Endothelial cell of umbilical vein (primary cell): ENCODE measurements at regions of chr5 and their contacts with region 1.

Region 1: GRCh38 chr5:127206320-127207113 is 84.1 kb upstream of the MEGF10 start:
- DNase-seq: peak; percentile 95
- H3K4me3 ChIP-seq: no peak overlapping the region
- H3K27ac ChIP-seq: peak overlapping the region; percentile 58
- H3K4me1 ChIP-seq: peaks cover 18% of the 10 kb centered on the region
- H3K27me3 ChIP-seq: peaks cover 0 to 2% of the 10 kb centered on the region in 2 experiments
- CTCF ChIP-seq: no peak
- POLR2A ChIP-seq: no peak

Region 2: GRCh38 chr5:126912616-126913200 is 293.8 kb before region 1 on chr5:
- CTCF ChIA-PET with region 1: no interaction called
- POLR2A ChIA-PET with region 1: no interaction called
- dilution Hi-C with region 1: no loop called
- intact Hi-C with region 1: no loop called
- DNase-seq: no peak
- H3K4me3 ChIP-seq: no peak overlapping the region
- H3K27ac ChIP-seq: no peak overlapping the region
- H3K4me1 ChIP-seq: peaks cover 7% of the 10 kb centered on the region
- H3K27me3 ChIP-seq: no peaks in the 10 kb centered on the region
- CTCF ChIP-seq: no peak
- POLR2A ChIP-seq: no peak

Region 3: DNA sequence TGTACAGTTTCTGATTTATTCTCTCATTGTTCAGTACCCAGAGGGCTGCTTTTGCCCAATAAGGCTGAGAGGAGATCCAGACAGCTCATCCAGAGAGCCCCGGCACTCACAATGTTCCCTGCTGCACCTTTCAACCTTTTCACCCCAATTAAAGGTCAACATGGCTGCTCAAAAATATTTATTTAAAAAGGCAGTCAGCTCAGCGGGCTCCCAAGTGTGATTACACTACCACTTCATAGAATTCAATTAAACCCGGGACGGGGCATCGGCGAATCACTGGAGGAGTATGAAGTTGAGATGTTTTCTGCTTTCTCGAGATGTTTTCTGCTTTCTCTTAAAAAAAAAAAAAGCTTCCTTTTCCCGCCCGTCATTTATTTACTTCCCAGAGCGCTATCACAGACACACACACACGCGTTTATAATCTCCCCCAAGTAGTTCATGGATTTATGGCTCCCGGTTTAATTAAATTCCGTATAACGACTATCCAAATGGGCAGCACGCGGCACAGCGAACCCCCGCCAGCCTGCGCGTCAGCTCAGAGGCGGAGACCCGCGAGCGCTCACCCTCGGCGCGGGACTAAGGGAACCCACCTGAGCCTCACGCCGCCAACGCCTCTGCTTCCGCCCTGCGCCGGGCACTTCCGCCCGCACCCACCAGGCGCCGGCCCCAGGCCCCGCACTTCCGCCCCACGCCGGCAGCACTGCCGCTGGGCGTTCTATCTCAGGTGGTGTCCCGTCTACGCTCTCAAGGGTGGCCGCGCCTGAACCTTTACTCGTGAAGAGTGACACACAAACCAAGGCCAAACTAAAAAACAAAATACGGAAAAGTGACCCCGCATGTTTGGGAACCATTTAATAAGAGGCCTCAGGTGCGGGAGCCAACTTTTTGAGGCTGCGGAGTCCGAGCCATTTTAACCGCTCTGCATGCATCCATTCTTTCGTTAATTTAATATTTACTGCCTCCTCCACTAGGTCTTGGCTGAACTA is 133.4 kb before region 1 on chr5 and contains the start of gene C5orf63:
- CTCF ChIA-PET with region 1: no interaction called
- POLR2A ChIA-PET with region 1: no interaction called
- dilution Hi-C with region 1: no loop called
- intact Hi-C with region 1: loop called (anchors 5 kb)
- DNase-seq: peak; percentile 45
- H3K4me3 ChIP-seq: peak within 1 kb of the TSS; percentile 32 to 69 (median 56)
- H3K27ac ChIP-seq: peak within 1 kb of the TSS; percentile 72
- H3K4me1 ChIP-seq: peaks cover 61% of the 10 kb centered on the region
- H3K27me3 ChIP-seq: no peaks in the 10 kb centered on the region
- CTCF ChIP-seq: no peak
- POLR2A ChIP-seq: peak; percentile 41
- total RNA-seq, gene C5orf63: 4.0 and 5.3 TPM in 2 replicates

Region 4: DNA sequence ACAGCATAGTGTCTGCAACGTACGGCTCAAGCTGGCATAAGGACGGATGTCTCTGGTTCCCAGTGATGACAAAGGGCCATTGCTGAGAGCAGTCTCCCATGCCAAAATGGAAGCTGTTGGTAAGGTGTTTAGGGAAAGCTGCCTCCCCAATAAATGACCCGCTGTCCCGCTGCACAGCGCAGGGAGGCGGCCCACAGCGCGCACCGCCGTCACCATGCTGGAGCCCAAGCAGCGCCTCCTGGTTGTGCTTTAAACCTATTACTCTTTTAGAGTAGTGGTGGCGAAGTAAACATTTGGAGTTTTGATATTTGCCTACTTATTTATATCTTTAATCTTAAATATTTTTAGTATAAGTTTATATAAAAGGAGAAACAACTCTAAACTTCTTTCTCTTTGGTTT is 62.8 kb before region 1 on chr5:
- CTCF ChIA-PET with region 1: no interaction called
- POLR2A ChIA-PET with region 1: no interaction called
- dilution Hi-C with region 1: no loop called
- intact Hi-C with region 1: no loop called
- DNase-seq: no peak
- H3K4me3 ChIP-seq: no peak overlapping the region
- H3K27ac ChIP-seq: no peak overlapping the region
- H3K4me1 ChIP-seq: no peaks in the 10 kb centered on the region
- H3K27me3 ChIP-seq: no peaks in the 10 kb centered on the region
- CTCF ChIP-seq: no peak
- POLR2A ChIP-seq: no peak